ENCODE measurements at regions of chr11 and their contacts with region 1.

Region 1: DNA sequence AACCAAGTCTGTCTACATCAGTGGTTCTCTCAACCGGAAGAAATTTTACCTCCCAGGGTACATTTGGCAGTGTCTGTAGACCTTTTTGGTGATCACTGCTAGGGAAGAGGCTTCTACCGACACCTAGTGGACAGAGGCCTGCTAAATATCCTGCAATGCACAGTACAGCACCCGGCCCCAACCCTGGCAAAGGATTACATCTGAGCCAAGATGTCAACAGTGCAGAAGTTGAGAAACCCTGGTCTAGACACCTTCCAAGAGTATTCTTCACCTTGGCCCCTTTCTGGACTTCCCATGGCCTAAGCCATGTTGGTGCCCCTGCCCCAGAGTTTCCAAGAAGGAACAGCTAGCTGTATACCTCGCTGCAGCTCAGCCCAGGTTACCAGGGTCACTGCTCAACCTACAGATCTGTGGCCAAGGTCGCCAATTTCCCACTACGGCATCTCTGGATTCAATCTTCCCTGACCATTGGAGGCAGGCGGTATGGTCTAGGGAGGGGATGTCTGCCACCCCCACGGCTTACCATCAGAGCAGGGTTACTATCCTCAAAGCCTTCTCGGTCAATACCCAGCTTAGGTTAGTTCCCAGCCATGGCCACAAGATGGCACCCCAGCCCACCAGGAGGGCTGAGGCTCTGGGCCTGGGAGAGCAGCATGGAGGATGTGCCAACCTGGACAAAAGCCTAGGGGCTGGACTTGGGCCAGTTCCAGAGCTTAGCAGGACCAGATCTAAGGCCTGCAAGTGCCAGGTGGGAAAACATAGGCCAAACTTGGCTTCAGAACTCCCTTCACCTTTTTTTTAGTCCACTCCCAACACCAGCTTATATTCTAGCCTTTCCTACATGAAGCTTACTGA is 3.7 kb upstream of the KCNC1 start:
- DNase-seq: peak; percentile 79 to 91
- ATAC-seq: peak; percentile 82 to 93
- H3K4me3 ChIP-seq: no peak overlapping the region
- H3K27ac ChIP-seq: no peak overlapping the region
- H3K4me1 ChIP-seq: no peaks in the 10 kb centered on the region; the same call in 2 of the 3 replicates
- CTCF ChIP-seq: peak; percentile 77
- EP300 ChIP-seq: no peak
- POLR2A ChIP-seq: no peak
- RAD21 ChIP-seq: peak; percentile 84 to 93

Region 2: DNA sequence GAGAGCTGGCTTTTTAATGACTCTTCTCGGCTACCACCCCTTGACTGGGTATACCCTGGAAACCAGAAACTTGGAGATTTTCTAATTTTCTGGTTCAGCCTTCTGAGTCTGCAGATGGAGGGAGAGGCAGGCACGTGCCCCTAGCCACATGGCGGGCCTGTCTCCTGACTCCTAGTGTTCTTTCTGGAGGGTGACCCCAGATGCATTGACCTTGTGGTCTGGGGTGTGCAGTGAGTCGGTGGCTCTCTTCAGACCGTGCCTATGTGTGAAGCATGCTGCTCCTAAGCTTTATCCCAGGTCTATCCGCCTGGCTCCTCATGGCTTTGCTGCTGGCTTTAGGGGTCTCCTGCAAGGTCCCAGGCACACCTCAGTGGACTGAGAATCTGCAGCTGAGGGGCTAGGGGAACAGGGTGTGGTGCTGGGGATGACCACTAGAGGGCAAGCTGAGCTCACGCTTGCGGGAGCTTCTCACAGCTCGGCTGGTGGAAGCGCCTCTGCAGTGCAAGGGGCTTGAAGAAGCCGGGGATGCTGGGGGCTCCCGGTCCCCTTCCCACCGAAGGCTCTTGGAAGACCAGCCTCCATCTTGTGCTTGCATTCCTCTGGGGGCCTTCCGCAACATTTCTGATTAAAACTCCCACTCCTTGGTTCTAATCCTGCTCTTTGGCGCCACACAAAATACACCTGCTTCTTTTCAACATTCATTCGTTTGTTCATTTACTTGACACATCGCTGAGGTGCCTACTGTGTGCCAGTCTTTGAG is 132.0 kb before region 1 on chr11:
- CTCF ChIA-PET with region 1: interaction called, 64 read pairs
- POLR2A ChIA-PET with region 1: no interaction called
- DNase-seq: peak; percentile 59 to 62
- ATAC-seq: peak; percentile 85 to 96
- H3K4me3 ChIP-seq: no peak overlapping the region
- H3K27ac ChIP-seq: no peak overlapping the region
- H3K4me1 ChIP-seq: no peaks in the 10 kb centered on the region
- CTCF ChIP-seq: peak; percentile 86
- EP300 ChIP-seq: no peak
- POLR2A ChIP-seq: no peak
- RAD21 ChIP-seq: peak; percentile 88 to 94

Region 3: DNA sequence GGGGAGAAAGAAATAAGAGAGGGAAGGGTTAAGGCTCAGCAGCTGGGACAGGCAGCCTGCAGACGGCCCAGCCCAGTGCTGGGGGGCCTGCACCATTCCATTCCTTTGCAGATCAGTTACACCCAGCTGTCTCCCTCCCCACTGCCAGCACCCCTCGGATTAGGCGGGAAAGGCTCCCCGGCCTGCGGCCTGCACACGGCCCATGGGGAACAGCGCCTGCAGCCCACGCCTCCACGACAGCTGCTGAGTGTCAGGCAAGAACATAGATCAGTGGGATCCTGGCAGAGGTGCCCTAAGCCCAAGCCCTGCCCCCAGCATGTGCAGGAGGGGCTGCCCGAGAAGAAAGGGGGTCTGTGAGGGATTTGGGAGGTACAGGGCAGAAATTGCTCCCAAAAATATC is 77.2 kb before region 1 on chr11:
- CTCF ChIA-PET with region 1: no interaction called
- POLR2A ChIA-PET with region 1: no interaction called
- DNase-seq: no peak
- ATAC-seq: no peak
- H3K4me3 ChIP-seq: no peak overlapping the region
- H3K27ac ChIP-seq: no peak overlapping the region
- H3K4me1 ChIP-seq: no peaks in the 10 kb centered on the region
- CTCF ChIP-seq: no peak
- EP300 ChIP-seq: no peak
- POLR2A ChIP-seq: no peak
- RAD21 ChIP-seq: no peak

Region 4: DNA sequence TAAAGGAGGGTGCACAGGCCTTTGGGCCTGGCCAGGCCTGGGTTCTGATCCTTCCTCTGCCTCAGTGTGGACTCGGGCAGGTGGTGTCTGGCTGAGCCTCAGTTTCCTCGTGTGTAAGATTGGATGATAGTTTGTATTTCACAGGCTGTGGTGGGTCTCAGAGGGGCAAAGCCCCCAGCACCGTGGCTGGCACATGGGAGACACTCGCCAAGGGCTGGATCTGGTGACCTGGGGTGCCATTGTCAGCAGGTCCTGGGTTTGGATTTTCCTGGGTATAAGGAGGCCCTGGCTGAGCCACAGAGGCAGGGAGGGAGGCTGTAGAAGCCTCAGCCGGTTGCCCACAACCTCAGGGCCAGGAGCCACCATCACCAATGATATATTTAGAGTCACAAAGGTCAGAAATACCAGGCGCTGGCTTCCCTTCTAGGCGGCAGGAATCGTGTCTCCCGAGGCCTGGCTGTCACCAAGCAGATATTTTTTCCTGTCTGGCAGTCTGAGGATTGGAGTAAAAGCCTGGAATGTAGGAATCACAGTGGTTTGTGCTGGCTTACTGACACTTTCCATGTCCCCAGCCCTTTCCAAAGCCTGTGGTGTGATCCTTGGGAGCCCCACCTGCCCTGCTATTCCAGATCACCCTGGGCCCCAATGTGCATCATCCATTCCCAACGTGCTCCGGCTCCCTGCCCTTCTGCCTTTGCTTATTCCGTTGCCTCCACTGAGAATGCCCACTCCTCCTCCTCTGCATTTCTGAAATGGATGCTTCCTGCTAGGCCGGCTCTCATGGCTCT is 19.4 kb after region 1 on chr11:
- CTCF ChIA-PET with region 1: interaction called, 94 read pairs
- POLR2A ChIA-PET with region 1: no interaction called
- DNase-seq: no peak
- ATAC-seq: no peak
- H3K4me3 ChIP-seq: no peak overlapping the region
- H3K27ac ChIP-seq: no peak overlapping the region
- H3K4me1 ChIP-seq: no peaks in the 10 kb centered on the region
- CTCF ChIP-seq: no peak
- EP300 ChIP-seq: no peak
- POLR2A ChIP-seq: no peak
- RAD21 ChIP-seq: no peak

Region 5: GRCh38 chr11:17765356-17766072 is 34.7 kb after region 1 on chr11:
- CTCF ChIA-PET with region 1: interaction called, 17 read pairs
- POLR2A ChIA-PET with region 1: no interaction called
- DNase-seq: peak in 1 of 2 experiments; percentile 17
- ATAC-seq: no peak
- H3K4me3 ChIP-seq: no peak overlapping the region
- H3K27ac ChIP-seq: no peak overlapping the region
- H3K4me1 ChIP-seq: 0 out of 3 replicates have a peak, but pooled peaks cover 4% of the 10 kb centered on the region
- CTCF ChIP-seq: no peak
- EP300 ChIP-seq: no peak
- POLR2A ChIP-seq: no peak
- RAD21 ChIP-seq: no peak

Region 6: GRCh38 chr11:17827006-17827405 is 96.2 kb after region 1 on chr11:
- CTCF ChIA-PET with region 1: interaction called, 26 read pairs
- POLR2A ChIA-PET with region 1: no interaction called
- DNase-seq: peak; percentile 11 to 12
- ATAC-seq: peak; percentile 54 to 72; a peak in 4 of 6 replicates
- H3K4me3 ChIP-seq: no peak overlapping the region
- H3K27ac ChIP-seq: no peak overlapping the region
- H3K4me1 ChIP-seq: no peaks in the 10 kb centered on the region
- CTCF ChIP-seq: peak; percentile 26; the same call in 1 of the 3 replicates
- EP300 ChIP-seq: no peak
- POLR2A ChIP-seq: no peak
- RAD21 ChIP-seq: 0 out of 5 replicates have a peak, but pooled peaks have one; percentile 13 to 21

Region 7: DNA sequence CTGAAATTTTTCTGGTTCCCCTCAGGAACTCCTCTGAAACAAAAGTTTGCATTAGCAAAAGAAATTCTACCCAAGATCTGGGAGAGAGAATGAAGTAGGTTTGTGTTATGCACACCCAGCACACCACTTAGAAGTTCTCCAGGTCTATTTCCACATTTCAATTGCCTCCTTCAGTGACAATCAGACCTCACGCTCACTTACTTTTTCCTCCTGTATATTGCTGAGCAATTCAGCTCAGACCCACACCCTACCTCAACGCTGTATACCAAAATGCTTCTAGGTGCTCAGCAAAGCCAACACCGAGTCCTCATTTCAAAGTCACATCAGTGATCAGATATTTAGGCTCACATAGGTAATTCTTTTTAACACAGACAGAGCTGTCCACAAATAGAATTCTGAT is 420.7 kb after region 1 on chr11:
- CTCF ChIA-PET with region 1: no interaction called
- POLR2A ChIA-PET with region 1: no interaction called
- DNase-seq: no peak
- ATAC-seq: no peak
- H3K4me3 ChIP-seq: no peak overlapping the region
- H3K27ac ChIP-seq: no peak overlapping the region
- H3K4me1 ChIP-seq: no peaks in the 10 kb centered on the region
- CTCF ChIP-seq: no peak
- EP300 ChIP-seq: no peak
- POLR2A ChIP-seq: no peak
- RAD21 ChIP-seq: no peak